Mammary epithelial cell (primary cell): ENCODE measurements at regions of chr19 and their contacts with region 1.

Region 1: DNA sequence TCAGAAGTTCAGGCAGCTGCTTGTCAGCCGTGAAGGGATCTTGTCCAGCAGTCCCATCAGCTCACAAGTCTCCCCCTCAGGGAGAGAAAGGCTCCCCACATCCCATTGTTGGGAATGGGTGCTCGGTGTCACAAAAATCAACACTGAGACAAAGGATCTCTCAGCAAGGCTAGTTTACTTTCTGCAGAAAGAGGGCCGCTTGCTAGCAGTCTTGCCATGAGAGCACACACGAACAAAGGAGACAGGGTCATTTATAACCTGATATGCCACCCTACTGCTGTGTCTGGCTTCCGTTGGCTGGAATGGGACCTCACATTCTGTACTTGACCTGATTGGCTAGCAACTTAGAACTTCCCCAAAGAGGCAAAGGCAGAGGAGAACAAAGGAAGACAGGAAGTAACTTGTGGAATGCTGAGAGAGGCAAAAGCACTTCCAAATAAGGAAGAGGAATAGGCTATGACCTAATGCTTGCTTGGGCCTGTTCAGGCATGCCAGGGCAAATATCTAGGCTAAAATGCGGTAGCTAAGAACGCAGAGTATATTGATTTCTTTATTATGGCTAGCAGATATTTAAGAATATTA is 8.7 kb upstream of the IGFL3 start:
- DNase-seq: peak; percentile 92
- H3K4me3 ChIP-seq: peak overlapping the region in 2 of 3 experiments; percentile 30 to 35
- H3K27ac ChIP-seq: peak overlapping the region; percentile 86
- H3K4me1 ChIP-seq: peaks cover 26% of the 10 kb centered on the region
- H3K27me3 ChIP-seq: no peaks in the 10 kb centered on the region
- CTCF ChIP-seq: no peak

Region 2: GRCh38 chr19:46173886-46174507 is 40.8 kb after region 1 on chr19:
- CTCF ChIA-PET with region 1: no interaction called
- dilution Hi-C with region 1: loop called (anchors 5 kb)
- in situ Hi-C with region 1: no loop called
- intact Hi-C with region 1: no loop called
- DNase-seq: no peak
- H3K4me3 ChIP-seq: no peak overlapping the region
- H3K27ac ChIP-seq: no peak overlapping the region
- H3K4me1 ChIP-seq: no peaks in the 10 kb centered on the region
- H3K27me3 ChIP-seq: no peaks in the 10 kb centered on the region
- CTCF ChIP-seq: peak in 1 of 2 donors; percentile 0

Region 3: GRCh38 chr19:46181388-46181779 is 48.2 kb after region 1 on chr19:
- CTCF ChIA-PET with region 1: no interaction called
- dilution Hi-C with region 1: no loop called
- in situ Hi-C with region 1: no loop called
- intact Hi-C with region 1: loop called (anchors 2 kb)
- DNase-seq: no peak
- H3K4me3 ChIP-seq: no peak overlapping the region
- H3K27ac ChIP-seq: peak overlapping the region; percentile 85
- H3K4me1 ChIP-seq: peaks cover 26% of the 10 kb centered on the region
- H3K27me3 ChIP-seq: no peaks in the 10 kb centered on the region
- CTCF ChIP-seq: no peak